ENCODE measurements at regions of chr4 and their contacts with region 1.

Region 1: GRCh38 chr4:152385551-152385950 is 150.3 kb downstream of the FBXW7 start:
- DNase-seq: no peak
- H3K4me3 ChIP-seq: no peak overlapping the region
- CTCF ChIP-seq: peak; percentile 34

Region 2: GRCh38 chr4:152220201-152220666 is 165.3 kb before region 1 on chr4:
- CTCF ChIA-PET with region 1: no interaction called
- POLR2A ChIA-PET with region 1: no interaction called
- DNase-seq: no peak
- H3K4me3 ChIP-seq: no peak overlapping the region
- CTCF ChIP-seq: no peak

Region 3: GRCh38 chr4:152398060-152398459 is 12.5 kb after region 1 on chr4:
- CTCF ChIA-PET with region 1: interaction called, 18 read pairs
- POLR2A ChIA-PET with region 1: no interaction called
- DNase-seq: no peak
- H3K4me3 ChIP-seq: no peak overlapping the region
- CTCF ChIP-seq: peak; percentile 15

Region 4: DNA sequence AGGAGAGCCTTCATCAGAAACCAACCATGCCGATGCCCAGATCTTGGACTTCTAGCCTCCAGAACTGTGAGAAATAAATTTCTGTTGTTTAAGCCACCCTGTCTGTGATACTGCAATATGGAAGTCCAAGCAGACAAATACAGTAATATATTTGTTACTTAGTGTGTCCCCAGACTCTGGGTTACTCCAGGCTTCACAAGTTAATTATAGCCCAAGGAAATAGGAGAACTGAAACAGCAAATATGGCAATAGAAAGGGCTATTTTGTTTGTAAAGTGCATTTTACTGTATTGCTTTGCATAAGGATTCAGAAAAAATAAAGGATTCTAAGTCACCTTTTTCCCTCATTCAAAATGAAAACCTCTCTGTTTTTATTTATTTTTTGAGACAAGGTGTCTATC is 378.2 kb after region 1 on chr4:
- CTCF ChIA-PET with region 1: no interaction called
- POLR2A ChIA-PET with region 1: no interaction called
- DNase-seq: no peak
- H3K4me3 ChIP-seq: no peak overlapping the region
- CTCF ChIP-seq: no peak

Measured in AG04449 (cell line).